Esophagus muscularis mucosa (tissue), 4 donors: ENCODE measurements at regions of chr3 and their contacts with region 1.

Region 1: DNA sequence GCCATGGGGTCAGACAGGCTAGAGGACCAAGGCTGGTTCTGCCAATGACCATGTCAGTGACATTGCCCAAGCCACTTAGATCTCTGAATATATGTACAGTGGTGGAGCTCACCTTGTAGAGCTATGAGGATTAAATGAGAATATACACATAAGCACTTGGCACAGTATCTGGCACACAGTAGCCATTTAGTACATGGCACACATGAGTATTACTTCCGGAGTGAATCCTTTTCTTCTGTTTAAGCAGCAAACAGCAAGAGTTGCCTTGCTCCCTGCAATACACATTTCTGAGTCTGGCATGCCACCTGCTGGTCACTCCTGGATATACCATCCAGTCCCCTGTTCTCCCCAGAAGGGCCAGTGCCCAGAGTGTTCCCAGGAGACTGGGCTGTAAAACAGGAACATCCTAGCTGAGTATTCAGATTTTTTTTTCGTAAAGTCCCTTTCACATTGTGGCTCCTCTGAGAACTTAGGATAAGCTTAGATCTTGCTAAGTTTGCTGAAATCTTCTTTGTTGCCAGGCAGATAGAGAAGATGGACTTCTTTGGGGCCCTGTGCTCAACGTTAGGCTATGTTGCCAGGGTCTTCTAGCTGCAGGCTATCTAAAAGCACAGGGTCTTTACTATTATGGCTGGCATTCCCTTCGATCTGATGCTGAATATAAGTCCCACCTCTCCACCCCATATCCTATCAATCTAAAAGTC is 203.4 kb downstream of the ADAMTS9 start:
- DNase-seq: peak; percentile 93
- H3K4me3 ChIP-seq: no peak overlapping the region
- H3K27ac ChIP-seq: no peak overlapping the region
- H3K4me1 ChIP-seq: peaks cover 4 to 18% (median 12%) of the 10 kb centered on the region in 4 donors
- H3K27me3 ChIP-seq: no peaks in the 10 kb centered on the region
- CTCF ChIP-seq: peak; percentile 85 to 95 (median 88)
- EP300 ChIP-seq: no peak
- POLR2A ChIP-seq: no peak

Region 2: GRCh38 chr3:64030741-64031140 is 453.7 kb before region 1 on chr3:
- intact Hi-C with region 1: loop called (anchors 1 kb)
- DNase-seq: no peak
- H3K4me3 ChIP-seq: peak overlapping the region; percentile 19 to 42 (median 34)
- H3K27ac ChIP-seq: peak overlapping the region in 2 of 4 donors; percentile 33 to 62
- H3K4me1 ChIP-seq: peaks cover 0 to 23% (median 19%) of the 10 kb centered on the region in 4 donors
- H3K27me3 ChIP-seq: no peaks in the 10 kb centered on the region
- CTCF ChIP-seq: peak; percentile 90 to 93 (median 90)
- EP300 ChIP-seq: no peak
- POLR2A ChIP-seq: no peak

Region 3: GRCh38 chr3:64187065-64187959 is 297.1 kb before region 1 on chr3:
- intact Hi-C with region 1: loop called (anchors 10 kb)
- DNase-seq: no peak
- H3K4me3 ChIP-seq: peak overlapping the region in 1 of 4 donors; percentile 22
- H3K27ac ChIP-seq: peak overlapping the region; percentile 77 to 87 (median 82)
- H3K4me1 ChIP-seq: peaks cover 68 to 88% (median 85%) of the 10 kb centered on the region in 4 donors
- H3K27me3 ChIP-seq: no peaks in the 10 kb centered on the region
- CTCF ChIP-seq: peak in 1 of 3 experiments; percentile 23
- EP300 ChIP-seq: no peak
- POLR2A ChIP-seq: no peak

Region 4: GRCh38 chr3:64291345-64291744 is 193.1 kb before region 1 on chr3:
- intact Hi-C with region 1: loop called (anchors 10 kb)
- DNase-seq: no peak
- H3K4me3 ChIP-seq: no peak overlapping the region
- H3K27ac ChIP-seq: peak overlapping the region in 3 of 4 donors; percentile 10 to 59 (median 25)
- H3K4me1 ChIP-seq: peaks cover 0 to 23% (median 17%) of the 10 kb centered on the region in 4 donors
- H3K27me3 ChIP-seq: no peaks in the 10 kb centered on the region
- CTCF ChIP-seq: no peak
- EP300 ChIP-seq: no peak
- POLR2A ChIP-seq: no peak

Region 5: DNA sequence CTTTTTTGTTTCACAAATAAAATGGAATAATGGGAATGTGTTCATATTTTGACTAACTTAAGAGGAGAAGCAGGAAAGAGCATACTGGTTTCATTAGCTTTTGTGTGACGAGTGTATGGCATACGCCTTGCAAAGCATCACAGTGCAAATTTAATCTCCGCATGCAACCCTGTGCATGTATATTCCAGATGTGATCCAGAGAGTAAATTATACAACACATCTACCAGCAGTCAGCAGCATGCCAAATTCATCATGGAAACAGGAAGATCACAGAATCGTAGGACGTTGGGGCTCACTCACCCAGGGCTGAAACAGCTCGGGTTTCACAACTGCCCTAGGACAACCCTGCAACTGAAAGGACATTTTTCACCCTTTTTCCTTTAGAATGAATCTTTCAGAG is 150.0 kb after region 1 on chr3:
- intact Hi-C with region 1: no loop called
- DNase-seq: no peak
- H3K4me3 ChIP-seq: no peak overlapping the region
- H3K27ac ChIP-seq: no peak overlapping the region
- H3K4me1 ChIP-seq: no peaks in the 10 kb centered on the region
- H3K27me3 ChIP-seq: no peaks in the 10 kb centered on the region
- CTCF ChIP-seq: no peak
- EP300 ChIP-seq: no peak
- POLR2A ChIP-seq: no peak